Sciatic nerve (tissue), 2 donors: ENCODE measurements at regions of chr14 and their contacts with region 1.

Region 1: GRCh38 chr14:51996148-51996746 is 6.9 kb downstream of the RTRAF start:
- DNase-seq: no peak
- ATAC-seq: no peak

Region 2: GRCh38 chr14:52094546-52095271 is 98.5 kb after region 1 on chr14:
- intact Hi-C with region 1: no loop called
- DNase-seq: no peak
- ATAC-seq: no peak

Region 3: GRCh38 chr14:52131640-52132320 is 135.5 kb after region 1 on chr14:
- intact Hi-C with region 1: loop called (anchors 5 kb)
- DNase-seq: peak; percentile 89
- ATAC-seq: peak; percentile 93